ENCODE measurements at regions of chr7 and their contacts with region 1.

Region 1: DNA sequence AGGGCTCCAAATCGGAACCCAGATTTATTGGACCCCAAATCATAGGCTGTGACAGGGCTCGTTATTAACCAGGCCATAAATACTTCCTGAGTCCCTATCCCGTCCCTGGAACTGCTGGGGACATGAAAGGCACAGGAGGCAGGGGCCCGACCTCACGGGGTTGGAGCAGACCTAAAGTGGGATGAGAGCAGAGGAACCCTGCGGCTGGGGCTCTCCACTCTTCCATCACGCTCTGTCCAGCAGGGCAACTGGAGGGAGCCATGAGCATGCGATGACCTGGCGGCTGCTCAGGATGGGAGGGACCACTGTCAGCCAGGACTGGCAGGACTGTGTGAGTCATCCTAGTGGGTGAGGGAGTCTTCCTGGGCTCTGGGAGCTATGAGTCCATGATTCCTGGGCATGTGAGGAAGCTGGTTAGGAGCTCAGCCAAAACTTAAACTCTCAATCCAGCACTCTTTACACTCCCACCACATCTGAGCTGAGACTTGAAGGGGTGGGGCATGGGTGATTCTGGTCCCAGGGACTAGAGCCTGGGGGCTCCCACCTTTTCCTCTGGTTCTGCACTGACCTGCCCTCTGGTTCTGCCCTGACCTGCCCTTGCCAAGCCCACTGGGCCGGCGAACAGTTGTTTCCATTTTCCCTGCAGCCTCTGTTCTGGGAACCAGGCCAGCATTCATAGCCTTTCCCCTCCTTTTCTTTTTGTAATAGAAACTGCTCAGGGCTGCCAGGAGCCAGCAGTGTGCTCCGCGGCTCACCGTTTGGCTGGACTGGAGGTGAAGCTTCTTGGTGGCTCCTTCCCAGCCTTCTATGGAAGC is 47.1 kb downstream of the SYPL1 start:
- DNase-seq: peak; percentile 99
- H3K4me3 Mint-ChIP-seq: peak overlapping the region; percentile 60
- H3K27ac Mint-ChIP-seq: peak overlapping the region; percentile 86
- H3K4me1 Mint-ChIP-seq: peaks cover 66% of the 10 kb centered on the region
- H3K27me3 Mint-ChIP-seq: no peaks in the 10 kb centered on the region
- CTCF ChIP-seq: no peak

Region 2: DNA sequence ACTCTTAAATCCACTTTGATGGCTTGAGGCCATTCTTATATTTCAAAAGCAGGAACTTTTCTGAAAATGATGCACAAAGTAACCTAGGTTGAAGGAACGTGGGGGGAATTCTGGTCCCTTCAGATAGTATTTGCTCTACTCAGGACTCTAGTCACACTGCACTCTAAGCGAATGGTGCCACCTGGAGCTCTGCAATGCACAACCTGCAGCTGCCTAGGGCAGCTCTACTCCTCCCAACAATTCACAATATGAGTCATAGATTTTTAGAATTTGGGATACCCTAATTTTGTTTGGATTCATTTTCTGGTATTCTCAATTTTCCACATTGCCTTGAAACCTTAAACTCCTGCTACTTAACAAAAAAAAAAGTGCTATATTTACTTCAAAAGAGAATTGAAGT is 29.8 kb after region 1 on chr7:
- CTCF ChIA-PET with region 1: interaction called, 50 read pairs
- POLR2A ChIA-PET with region 1: interaction called, 36 read pairs
- intact Hi-C with region 1: no loop called
- DNase-seq: peak; percentile 23
- H3K4me3 Mint-ChIP-seq: no peak overlapping the region
- H3K27ac Mint-ChIP-seq: no peak overlapping the region
- H3K4me1 Mint-ChIP-seq: peaks cover 11% of the 10 kb centered on the region
- H3K27me3 Mint-ChIP-seq: no peaks in the 10 kb centered on the region
- CTCF ChIP-seq: no peak

Region 3: DNA sequence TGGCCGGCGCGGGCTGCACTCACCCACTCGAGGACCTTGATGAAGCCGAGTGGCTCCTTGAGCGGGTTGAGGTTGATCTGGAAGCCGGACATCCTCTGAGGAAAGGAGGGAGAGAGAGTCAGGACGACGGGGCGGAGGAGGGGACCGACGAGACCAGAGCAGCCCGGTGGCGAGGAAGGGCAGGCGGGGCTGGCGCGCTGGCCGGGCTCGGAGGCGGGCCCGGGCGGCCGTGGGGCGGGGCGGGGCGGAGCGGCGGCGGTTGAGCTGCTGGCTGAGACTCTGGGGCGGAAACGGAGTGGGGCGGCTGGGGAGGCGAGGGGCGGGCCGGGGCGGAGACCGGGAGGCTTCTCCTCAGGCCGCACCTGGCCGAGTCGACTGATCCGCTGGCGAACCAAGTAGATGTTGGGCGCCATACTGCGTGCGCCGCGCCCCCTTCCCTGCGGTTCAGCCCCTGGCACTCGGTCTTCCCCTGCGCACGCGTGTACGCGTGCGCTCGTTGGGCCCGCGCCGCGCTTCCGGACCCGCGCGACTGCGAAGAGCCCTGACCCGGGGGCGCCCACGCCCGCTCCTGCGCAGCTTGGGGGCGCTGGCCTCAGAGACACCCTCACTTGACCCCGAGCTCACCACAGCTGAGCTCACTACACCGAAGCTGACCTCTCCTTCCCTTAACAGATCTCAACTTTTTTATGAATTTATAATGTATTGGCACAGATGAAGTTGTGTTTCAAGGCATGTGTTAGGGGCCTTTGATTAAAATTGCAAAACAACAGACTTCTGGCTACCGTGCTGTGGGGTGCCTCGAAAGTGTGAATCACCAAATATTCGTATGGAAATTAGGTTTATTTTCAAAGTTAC is 47.4 kb after region 1 on chr7 and contains the start of gene SYPL1:
- CTCF ChIA-PET with region 1: interaction called, 8 read pairs
- POLR2A ChIA-PET with region 1: interaction called, 139 read pairs
- intact Hi-C with region 1: loop called (anchors 1 kb)
- DNase-seq: peak; percentile 92
- H3K4me3 Mint-ChIP-seq: peak within 1 kb of the TSS; percentile 88
- H3K27ac Mint-ChIP-seq: peak within 1 kb of the TSS; percentile 95
- H3K4me1 Mint-ChIP-seq: peaks cover 23% of the 10 kb centered on the region
- H3K27me3 Mint-ChIP-seq: no peaks in the 10 kb centered on the region
- CTCF ChIP-seq: no peak
- total RNA-seq, gene SYPL1: 77.6 and 92.1 TPM in 2 replicates

Region 4: DNA sequence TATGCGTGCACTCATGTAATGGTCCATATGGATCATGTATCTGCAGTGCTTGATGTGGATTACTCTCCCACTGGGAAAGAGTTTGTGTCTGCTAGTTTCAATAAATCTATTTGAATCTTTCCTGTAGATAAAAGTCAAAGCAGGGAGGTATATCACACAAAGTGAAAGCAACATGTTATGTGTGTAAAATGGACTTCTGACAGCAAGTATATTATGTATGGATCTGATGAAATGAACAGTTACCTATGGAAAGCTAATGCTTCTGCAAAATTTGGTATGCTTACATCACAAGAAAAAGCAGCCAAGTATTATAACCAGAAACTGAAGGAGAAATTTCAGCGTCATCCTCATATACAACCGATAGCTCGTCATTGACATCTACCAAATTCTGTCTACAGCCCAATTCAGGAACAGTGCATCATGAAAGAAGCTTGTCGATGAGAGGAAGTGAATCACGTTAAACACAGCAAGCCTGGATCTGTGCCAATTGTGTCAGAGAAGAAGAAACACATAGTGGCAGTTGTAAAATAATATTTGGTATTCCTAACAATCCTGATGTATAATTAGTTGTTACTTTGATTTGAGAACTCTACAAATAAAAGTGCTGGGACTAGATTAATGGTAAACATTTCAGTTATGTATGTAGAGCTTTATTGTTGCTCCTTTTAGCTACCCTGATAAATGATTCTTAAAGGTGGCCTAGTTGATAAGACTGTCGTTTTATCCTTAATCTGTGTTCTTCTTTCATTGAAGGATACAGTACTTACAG is 61.4 kb after region 1 on chr7:
- CTCF ChIA-PET with region 1: no interaction called
- POLR2A ChIA-PET with region 1: interaction called, 12 read pairs
- intact Hi-C with region 1: no loop called
- DNase-seq: peak; percentile 86
- H3K4me3 Mint-ChIP-seq: no peak overlapping the region
- H3K27ac Mint-ChIP-seq: no peak overlapping the region
- H3K4me1 Mint-ChIP-seq: peaks cover 12% of the 10 kb centered on the region
- H3K27me3 Mint-ChIP-seq: no peaks in the 10 kb centered on the region
- CTCF ChIP-seq: no peak

Region 5: DNA sequence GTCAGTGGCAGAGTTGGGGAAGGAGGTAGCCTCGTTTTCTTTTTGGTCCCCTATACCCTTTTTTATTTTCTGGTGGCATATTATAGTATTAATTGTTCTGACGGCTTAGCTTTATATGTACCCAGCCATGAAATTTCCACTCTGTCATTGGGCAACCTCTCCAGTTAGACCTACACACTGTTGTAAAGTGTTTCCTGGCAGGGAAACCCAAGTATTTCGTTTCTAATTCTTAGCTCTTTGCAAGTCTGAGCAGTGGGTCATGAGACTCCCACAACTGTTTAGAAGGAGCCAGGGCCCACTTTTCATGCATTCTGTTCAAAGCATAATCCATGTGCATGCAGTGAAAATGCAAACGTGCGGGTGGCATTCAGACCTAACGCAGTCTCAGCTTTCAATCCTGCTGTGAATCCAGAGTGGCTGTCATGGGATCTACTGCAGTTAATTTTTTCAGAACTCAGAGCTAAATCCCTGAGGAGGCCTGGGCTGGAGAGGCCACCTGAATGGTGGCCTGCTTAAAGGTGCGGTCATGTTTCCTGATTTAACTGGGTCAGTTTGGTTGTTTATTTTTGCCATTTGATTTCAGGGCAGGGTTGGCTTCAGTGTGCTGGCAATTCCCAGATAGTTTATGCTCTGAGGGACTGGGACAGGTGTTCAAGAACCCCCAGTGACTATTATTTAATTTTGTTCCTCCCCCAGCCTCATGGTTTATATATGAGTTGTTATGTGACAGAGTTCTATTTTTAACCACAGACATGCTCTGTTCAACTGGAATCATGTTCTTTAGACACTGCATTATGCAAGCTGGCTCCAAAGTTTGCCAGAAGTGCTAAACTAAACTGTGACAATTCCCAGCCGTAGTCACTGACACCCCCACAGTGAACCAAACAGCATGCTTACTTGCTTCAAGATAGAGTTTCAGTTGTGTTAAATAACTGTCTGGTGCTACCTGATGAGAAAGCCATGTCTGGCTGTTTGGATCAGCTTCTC is 74.6 kb after region 1 on chr7:
- CTCF ChIA-PET with region 1: no interaction called
- POLR2A ChIA-PET with region 1: no interaction called
- intact Hi-C with region 1: no loop called
- DNase-seq: peak; percentile 4
- H3K4me3 Mint-ChIP-seq: no peak overlapping the region
- H3K27ac Mint-ChIP-seq: no peak overlapping the region
- H3K4me1 Mint-ChIP-seq: no peaks in the 10 kb centered on the region
- H3K27me3 Mint-ChIP-seq: no peaks in the 10 kb centered on the region
- CTCF ChIP-seq: no peak